ENCODE measurements at regions of chr7 and their contacts with region 1.

Region 1: GRCh38 chr7:30671793-30672465 is 10.3 kb downstream of the CRHR2 start:
- DNase-seq: no peak
- ATAC-seq: no peak
- H3K4me3 ChIP-seq: no peak overlapping the region
- H3K27ac ChIP-seq: no peak overlapping the region
- H3K4me1 ChIP-seq: no peaks in the 10 kb centered on the region
- H3K27me3 ChIP-seq: peaks cover 9% of the 10 kb centered on the region
- CTCF ChIP-seq: no peak

Region 2: GRCh38 chr7:29095631-29096445 is 1576.1 kb before region 1 on chr7:
- CTCF ChIA-PET with region 1: no interaction called
- POLR2A ChIA-PET with region 1: interaction called, 10 read pairs
- in situ Hi-C with region 1: no loop called
- intact Hi-C with region 1: no loop called
- DNase-seq: no peak
- ATAC-seq: no peak
- H3K4me3 ChIP-seq: no peak overlapping the region
- H3K27ac ChIP-seq: no peak overlapping the region
- H3K4me1 ChIP-seq: no peaks in the 10 kb centered on the region; the same call in 1 of the 2 replicates
- H3K27me3 ChIP-seq: peaks cover 4% of the 10 kb centered on the region; the same call in 1 of the 2 replicates
- CTCF ChIP-seq: no peak

Region 3: GRCh38 chr7:30284298-30285066 is 387.4 kb before region 1 on chr7 and contains the start of gene ZNRF2:
- CTCF ChIA-PET with region 1: no interaction called
- POLR2A ChIA-PET with region 1: no interaction called
- in situ Hi-C with region 1: no loop called
- intact Hi-C with region 1: no loop called
- DNase-seq: peak; percentile 96
- ATAC-seq: peak; percentile 96
- H3K4me3 ChIP-seq: peak within 1 kb of the TSS; percentile 77 to 98
- H3K27ac ChIP-seq: peak within 1 kb of the TSS; percentile 94
- H3K4me1 ChIP-seq: peaks cover 17% of the 10 kb centered on the region
- H3K27me3 ChIP-seq: no peaks in the 10 kb centered on the region
- CTCF ChIP-seq: peak; percentile 68
- total RNA-seq, gene ZNRF2: 22.1 TPM

Region 4: GRCh38 chr7:30731619-30732018 is 59.7 kb after region 1 on chr7:
- CTCF ChIA-PET with region 1: no interaction called
- POLR2A ChIA-PET with region 1: no interaction called
- in situ Hi-C with region 1: no loop called
- intact Hi-C with region 1: loop called (anchors 10 kb)
- DNase-seq: no peak
- ATAC-seq: no peak
- H3K4me3 ChIP-seq: no peak overlapping the region
- H3K27ac ChIP-seq: no peak overlapping the region
- H3K4me1 ChIP-seq: no peaks in the 10 kb centered on the region
- H3K27me3 ChIP-seq: peaks cover 10% of the 10 kb centered on the region
- CTCF ChIP-seq: no peak

Region 5: DNA sequence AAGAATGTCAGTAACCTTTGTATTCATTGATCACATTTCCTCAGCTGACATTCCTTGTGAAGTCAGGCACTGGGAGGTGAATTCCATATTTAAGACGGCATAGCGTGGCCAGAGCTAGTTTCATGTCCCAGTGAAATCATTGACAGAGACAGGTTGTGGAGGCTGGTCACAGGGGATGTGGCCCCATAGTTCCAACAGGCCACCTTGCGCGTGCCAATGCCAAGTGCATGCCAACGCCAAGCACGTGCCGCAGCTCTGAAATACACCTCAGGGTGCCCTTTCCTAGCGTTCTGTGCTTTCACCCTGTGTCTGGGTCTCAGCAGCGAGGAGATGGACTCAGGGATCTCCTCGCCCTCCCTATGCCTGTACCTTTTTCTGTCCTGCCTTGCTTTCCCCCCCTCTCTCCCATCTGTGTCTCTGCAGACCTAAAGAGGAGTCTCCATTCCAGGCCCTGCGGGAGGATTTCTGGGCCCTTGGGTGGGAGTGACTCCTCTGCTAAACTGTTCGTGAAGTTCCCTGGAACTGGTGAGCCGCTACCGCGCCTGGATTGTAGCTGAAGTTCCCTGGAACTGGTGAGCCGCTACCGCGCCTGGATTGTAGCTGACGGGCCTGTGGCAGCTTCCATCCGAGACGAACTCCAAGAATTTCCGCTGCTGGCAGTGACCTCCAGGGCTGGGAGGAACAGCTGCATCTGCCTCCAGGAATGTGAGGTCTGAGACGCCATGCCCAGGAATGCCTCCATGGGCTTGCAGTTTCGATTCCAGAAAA is 259.4 kb after region 1 on chr7:
- CTCF ChIA-PET with region 1: no interaction called
- POLR2A ChIA-PET with region 1: no interaction called
- in situ Hi-C with region 1: no loop called
- intact Hi-C with region 1: no loop called
- DNase-seq: no peak
- ATAC-seq: no peak
- H3K4me3 ChIP-seq: no peak overlapping the region
- H3K27ac ChIP-seq: no peak overlapping the region
- H3K4me1 ChIP-seq: no peaks in the 10 kb centered on the region
- H3K27me3 ChIP-seq: no peaks in the 10 kb centered on the region
- CTCF ChIP-seq: no peak